Pancreas (tissue), 10 donors: ENCODE measurements at regions of chr3 and their contacts with region 1.

Region 1: GRCh38 chr3:141452036-141452435 is 34.8 kb upstream of the RASA2 start:
- DNase-seq: no peak
- ATAC-seq: peak; percentile 56 to 86 (median 82)
- H3K4me3 ChIP-seq: no peak overlapping the region
- H3K27ac ChIP-seq: peak overlapping the region in 2 of 4 donors; percentile 31 to 39
- H3K4me1 ChIP-seq: peaks cover 0 to 5% (median 0%) of the 10 kb centered on the region in 3 donors
- H3K27me3 ChIP-seq: no peaks in the 10 kb centered on the region
- CTCF ChIP-seq: peak in 3 of 4 donors; percentile 25 to 36 (median 34)

Region 2: GRCh38 chr3:141255846-141256261 is 196.2 kb before region 1 on chr3:
- intact Hi-C with region 1: no loop called
- DNase-seq: peak in 1 of 6 donors; percentile 47
- ATAC-seq: peak; percentile 91 to 97 (median 96)
- H3K4me3 ChIP-seq: no peak overlapping the region
- H3K27ac ChIP-seq: no peak overlapping the region
- H3K4me1 ChIP-seq: no peaks in the 10 kb centered on the region
- H3K27me3 ChIP-seq: no peaks in the 10 kb centered on the region
- CTCF ChIP-seq: peak; percentile 13 to 36 (median 28)

Region 3: DNA sequence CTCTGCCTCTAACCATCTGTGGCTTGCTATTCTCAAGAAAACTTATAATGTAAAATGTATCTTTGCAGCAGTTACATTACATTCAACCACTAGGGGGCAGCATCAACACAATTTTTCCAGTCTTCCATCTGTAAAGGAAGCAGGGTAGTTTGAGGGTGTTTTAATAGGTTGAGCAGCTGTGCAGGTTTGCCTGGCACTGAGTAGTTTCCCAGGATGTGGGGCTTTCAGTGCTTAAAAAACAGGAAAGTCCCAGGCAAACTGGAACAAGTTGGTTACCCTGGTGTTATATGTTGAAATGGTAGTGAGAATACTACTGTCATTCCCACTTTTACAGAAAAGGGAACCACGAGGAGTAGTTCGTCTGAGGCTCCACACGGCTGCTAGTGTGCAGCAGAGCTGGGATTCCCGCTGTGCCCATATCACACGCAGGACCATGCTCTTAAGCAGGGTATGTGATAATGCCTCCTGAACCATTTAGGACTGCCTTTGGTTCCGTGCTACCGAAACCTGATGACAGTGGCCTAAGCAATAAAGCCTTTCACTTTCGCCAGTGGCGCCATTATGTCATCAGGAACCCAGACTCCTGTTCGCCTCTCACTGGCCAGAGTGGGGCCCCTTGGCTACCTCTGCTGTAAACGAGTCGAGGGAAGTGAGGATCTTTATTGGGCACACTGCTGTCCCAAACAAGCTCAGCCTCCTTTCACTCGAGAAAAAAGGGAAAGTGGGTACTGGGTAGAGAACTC is 148.4 kb before region 1 on chr3:
- intact Hi-C with region 1: loop called in 2 of 3 experiments (anchors 5 kb)
- DNase-seq: peak in 3 of 6 donors; percentile 55 to 73 (median 58)
- ATAC-seq: peak; percentile 78 to 94 (median 92)
- H3K4me3 ChIP-seq: no peak overlapping the region
- H3K27ac ChIP-seq: no peak overlapping the region
- H3K4me1 ChIP-seq: peaks cover 0 to 3% (median 2%) of the 10 kb centered on the region in 3 donors
- H3K27me3 ChIP-seq: no peaks in the 10 kb centered on the region
- CTCF ChIP-seq: peak; percentile 70 to 87 (median 84)

Region 4: DNA sequence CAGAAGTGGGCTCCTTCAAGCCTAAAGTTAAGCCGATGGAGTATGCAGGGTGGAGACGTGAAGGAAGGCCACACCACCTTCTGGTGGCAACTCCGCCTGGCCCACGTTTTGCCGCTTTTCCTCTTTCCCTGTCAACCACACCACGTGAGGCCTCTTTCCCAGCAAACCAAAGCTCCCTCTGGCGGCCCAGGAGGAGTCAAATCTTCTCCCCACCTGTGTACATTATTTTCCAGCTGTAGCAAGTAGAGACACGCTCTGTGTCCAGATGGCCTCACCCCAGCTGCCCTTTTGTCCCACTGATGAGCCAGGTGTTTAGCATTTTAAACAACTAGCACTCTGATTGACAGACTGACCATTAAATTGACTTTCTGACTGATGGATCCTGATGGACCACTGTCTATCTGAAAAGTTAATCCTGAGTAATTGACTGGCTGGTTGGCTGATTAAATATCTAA is 143.4 kb before region 1 on chr3:
- intact Hi-C with region 1: loop called in 2 of 3 experiments (anchors 5 kb)
- DNase-seq: peak; percentile 78 to 85 (median 82)
- ATAC-seq: peak; percentile 42 to 56 (median 52)
- H3K4me3 ChIP-seq: no peak overlapping the region
- H3K27ac ChIP-seq: no peak overlapping the region
- H3K4me1 ChIP-seq: peaks cover 2 to 7% (median 6%) of the 10 kb centered on the region in 3 donors
- H3K27me3 ChIP-seq: no peaks in the 10 kb centered on the region
- CTCF ChIP-seq: peak; percentile 33 to 57 (median 46)

Region 5: DNA sequence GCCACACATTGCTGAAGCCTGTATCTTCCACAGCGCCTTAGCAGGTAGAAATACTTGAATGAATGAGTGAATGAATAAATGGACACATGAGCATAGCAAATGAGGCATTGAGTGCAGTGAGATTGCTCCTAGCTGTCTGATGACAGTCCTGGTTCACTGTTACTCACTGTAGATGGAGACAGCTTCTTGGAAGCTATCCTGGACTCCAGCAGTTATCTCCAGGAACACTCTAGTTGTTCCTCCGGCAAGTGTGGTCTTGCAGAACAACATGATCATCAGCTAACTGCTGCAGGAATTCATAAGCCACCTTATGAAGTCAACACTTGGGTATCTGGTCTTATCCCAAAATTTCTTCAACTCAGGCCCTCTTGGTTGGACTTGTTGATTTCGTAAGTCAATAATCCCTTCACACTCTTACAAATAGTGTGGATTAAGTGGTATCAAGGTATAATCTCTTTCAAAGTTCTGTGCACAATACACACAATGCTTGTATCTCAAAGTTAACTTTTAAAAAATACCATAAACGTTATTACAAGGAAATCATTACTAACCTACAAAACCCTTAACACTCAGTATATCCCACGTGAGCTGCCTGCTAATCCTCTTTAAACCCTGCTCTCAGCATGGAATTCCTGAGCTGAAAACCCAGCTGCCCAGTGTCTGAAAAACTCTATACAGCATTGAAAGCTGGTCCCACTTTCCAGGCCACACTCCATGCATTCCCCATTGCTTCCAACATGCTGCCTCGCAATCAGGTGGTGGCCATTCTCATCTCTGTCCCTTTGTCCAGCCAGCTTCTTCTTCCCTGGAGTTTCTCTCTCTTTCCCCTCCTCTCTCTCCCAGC is 98.2 kb before region 1 on chr3:
- intact Hi-C with region 1: loop called in 1 of 3 experiments (anchors 10 kb)
- DNase-seq: no peak
- ATAC-seq: no peak
- H3K4me3 ChIP-seq: no peak overlapping the region
- H3K27ac ChIP-seq: no peak overlapping the region
- H3K4me1 ChIP-seq: no peaks in the 10 kb centered on the region
- H3K27me3 ChIP-seq: no peaks in the 10 kb centered on the region
- CTCF ChIP-seq: no peak

Region 6: DNA sequence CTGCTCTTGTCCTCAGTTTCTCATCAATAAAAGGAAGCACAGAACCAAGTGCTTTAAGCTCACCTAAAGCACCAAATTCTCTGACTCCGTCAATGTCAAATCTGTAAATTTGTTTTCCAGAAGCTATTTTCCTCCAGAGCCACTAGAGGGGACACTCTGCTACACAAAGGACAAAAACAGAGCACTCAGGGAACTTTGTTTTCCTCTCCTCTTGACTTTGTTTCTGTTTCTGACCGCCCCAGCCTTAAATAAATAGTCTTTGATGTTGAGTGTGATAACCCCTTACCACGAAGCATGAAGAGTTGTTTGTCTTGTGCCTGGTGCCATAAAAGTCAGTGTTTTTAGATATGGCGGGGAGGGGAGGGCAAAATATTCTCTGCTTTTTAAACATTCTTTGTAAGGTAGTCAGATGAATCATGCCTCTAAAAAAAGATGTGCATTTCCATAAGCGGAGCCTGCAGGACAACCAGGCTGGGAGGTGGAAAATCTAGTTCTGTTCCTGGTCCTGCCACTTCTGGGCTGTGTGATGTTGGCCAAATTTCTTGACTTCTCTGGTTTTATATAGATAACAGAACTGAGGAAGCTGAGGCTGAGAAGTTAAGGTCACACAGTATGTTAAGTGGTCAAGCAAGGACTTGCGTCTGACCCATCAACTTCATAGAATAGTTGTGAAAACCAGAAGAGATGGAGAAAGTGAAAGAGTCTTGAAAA is 91.0 kb before region 1 on chr3:
- intact Hi-C with region 1: loop called (anchors 2 to 10 kb)
- DNase-seq: peak in 1 of 6 donors; percentile 9
- ATAC-seq: peak; percentile 84 to 97 (median 94)
- H3K4me3 ChIP-seq: no peak overlapping the region
- H3K27ac ChIP-seq: peak overlapping the region in 1 of 4 donors; percentile 32
- H3K4me1 ChIP-seq: peaks cover 4 to 6% (median 4%) of the 10 kb centered on the region in 3 donors
- H3K27me3 ChIP-seq: no peaks in the 10 kb centered on the region
- CTCF ChIP-seq: peak; percentile 33 to 72 (median 48)